CD4-positive, alpha-beta T cell (primary cell): ENCODE measurements at regions of chr6 and their contacts with region 1.

Region 1: DNA sequence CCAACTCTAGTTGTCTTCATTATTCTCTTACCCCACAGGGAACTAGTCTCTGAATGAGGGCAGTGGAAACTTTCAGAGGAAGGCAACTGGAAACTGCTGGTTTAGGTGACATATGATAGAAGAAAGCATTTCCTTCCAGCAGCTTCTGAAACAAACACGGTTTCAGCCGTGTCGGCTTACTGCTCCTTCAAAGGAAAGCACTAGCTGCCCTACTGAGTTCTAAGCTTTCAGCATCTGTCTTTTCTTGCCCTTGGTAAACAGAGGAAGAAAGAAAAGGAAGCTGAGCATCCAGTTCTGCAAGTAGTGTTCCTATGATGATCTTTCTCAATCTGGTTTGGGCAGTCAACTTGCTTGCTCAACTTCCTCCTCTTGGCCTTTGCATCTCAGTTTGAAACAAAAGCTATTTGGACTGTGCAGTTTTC is 117.5 kb upstream of the CEP85L start:
- DNase-seq: peak in 5 of 14 experiments; percentile 7 to 53 (median 34)
- ATAC-seq: peak; percentile 59
- H3K4me3 ChIP-seq: no peak overlapping the region
- H3K4me3 Mint-ChIP-seq: peak overlapping the region; percentile 27
- H3K27ac ChIP-seq: peak overlapping the region; percentile 47 to 51
- H3K27ac Mint-ChIP-seq: peak overlapping the region; percentile 78
- H3K4me1 ChIP-seq: peaks cover 15% of the 10 kb centered on the region
- H3K4me1 Mint-ChIP-seq: peaks cover 29% of the 10 kb centered on the region
- H3K27me3 ChIP-seq: no peaks in the 10 kb centered on the region
- H3K27me3 Mint-ChIP-seq: no peaks in the 10 kb centered on the region
- CTCF ChIP-seq: no peak

Region 2: DNA sequence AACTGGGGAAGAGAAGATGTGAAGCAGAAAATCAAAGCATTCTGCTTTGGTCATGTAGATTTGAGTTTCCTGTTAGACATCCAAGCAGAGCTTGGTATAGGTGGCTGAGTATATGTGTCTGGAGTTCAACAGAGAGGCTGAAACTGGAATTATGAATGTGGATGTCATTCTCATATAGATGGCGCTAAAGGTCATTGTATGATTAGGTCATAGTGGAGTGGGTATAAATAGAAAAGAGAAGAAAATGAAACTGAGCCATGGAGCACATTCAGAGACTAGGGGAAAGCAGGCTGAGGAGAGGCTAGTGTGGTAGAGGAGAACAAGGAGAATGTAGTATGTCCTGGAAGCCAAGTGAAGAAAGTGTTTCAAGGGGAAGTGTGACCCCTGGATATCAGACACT is 516.4 kb before region 1 on chr6:
- CTCF ChIA-PET with region 1: no interaction called
- POLR2A ChIA-PET with region 1: no interaction called
- intact Hi-C with region 1: no loop called
- DNase-seq: no peak
- ATAC-seq: no peak
- H3K4me3 ChIP-seq: no peak overlapping the region
- H3K4me3 Mint-ChIP-seq: no peak overlapping the region
- H3K27ac ChIP-seq: no peak overlapping the region
- H3K27ac Mint-ChIP-seq: no peak overlapping the region
- H3K4me1 ChIP-seq: no peaks in the 10 kb centered on the region
- H3K4me1 Mint-ChIP-seq: no peaks in the 10 kb centered on the region
- H3K27me3 ChIP-seq: peaks cover 0 to 4% of the 10 kb centered on the region in 2 experiments
- H3K27me3 Mint-ChIP-seq: peaks cover 21% of the 10 kb centered on the region
- CTCF ChIP-seq: no peak

Region 3: GRCh38 chr6:118644007-118644406 is 124.9 kb before region 1 on chr6:
- CTCF ChIA-PET with region 1: no interaction called
- POLR2A ChIA-PET with region 1: no interaction called
- intact Hi-C with region 1: no loop called
- DNase-seq: no peak
- ATAC-seq: no peak
- H3K4me3 ChIP-seq: no peak overlapping the region
- H3K4me3 Mint-ChIP-seq: no peak overlapping the region
- H3K27ac ChIP-seq: no peak overlapping the region
- H3K27ac Mint-ChIP-seq: peak overlapping the region; percentile 1
- H3K4me1 ChIP-seq: peaks cover 21% of the 10 kb centered on the region
- H3K4me1 Mint-ChIP-seq: peaks cover 64% of the 10 kb centered on the region
- H3K27me3 ChIP-seq: no peaks in the 10 kb centered on the region
- H3K27me3 Mint-ChIP-seq: no peaks in the 10 kb centered on the region
- CTCF ChIP-seq: no peak

Region 4: GRCh38 chr6:118724211-118724610 is 44.7 kb before region 1 on chr6:
- CTCF ChIA-PET with region 1: interaction called, 5 read pairs
- POLR2A ChIA-PET with region 1: no interaction called
- intact Hi-C with region 1: loop called in 1 of 2 experiments (anchors 5 kb)
- DNase-seq: peak in 1 of 14 experiments; percentile 23
- ATAC-seq: peak; percentile 55
- H3K4me3 ChIP-seq: no peak overlapping the region
- H3K4me3 Mint-ChIP-seq: peak overlapping the region; percentile 77
- H3K27ac ChIP-seq: no peak overlapping the region
- H3K27ac Mint-ChIP-seq: peak overlapping the region; percentile 75
- H3K4me1 ChIP-seq: peaks cover 27% of the 10 kb centered on the region
- H3K4me1 Mint-ChIP-seq: peaks cover 77% of the 10 kb centered on the region
- H3K27me3 ChIP-seq: no peaks in the 10 kb centered on the region
- H3K27me3 Mint-ChIP-seq: no peaks in the 10 kb centered on the region
- CTCF ChIP-seq: no peak

Region 5: GRCh38 chr6:118752803-118753202 is 16.1 kb before region 1 on chr6:
- CTCF ChIA-PET with region 1: no interaction called
- POLR2A ChIA-PET with region 1: no interaction called
- intact Hi-C with region 1: no loop called
- DNase-seq: no peak
- ATAC-seq: no peak
- H3K4me3 ChIP-seq: no peak overlapping the region
- H3K4me3 Mint-ChIP-seq: no peak overlapping the region
- H3K27ac ChIP-seq: no peak overlapping the region
- H3K27ac Mint-ChIP-seq: no peak overlapping the region
- H3K4me1 ChIP-seq: peaks cover 13% of the 10 kb centered on the region
- H3K4me1 Mint-ChIP-seq: peaks cover 18% of the 10 kb centered on the region
- H3K27me3 ChIP-seq: no peaks in the 10 kb centered on the region
- H3K27me3 Mint-ChIP-seq: no peaks in the 10 kb centered on the region
- CTCF ChIP-seq: no peak

Region 6: GRCh38 chr6:118787724-118788423 is 19.0 kb after region 1 on chr6:
- CTCF ChIA-PET with region 1: no interaction called
- POLR2A ChIA-PET with region 1: no interaction called
- intact Hi-C with region 1: no loop called
- DNase-seq: peak in 5 of 14 experiments; percentile 10 to 74 (median 54)
- ATAC-seq: peak; percentile 92
- H3K4me3 ChIP-seq: no peak overlapping the region
- H3K4me3 Mint-ChIP-seq: peak overlapping the region; percentile 5
- H3K27ac ChIP-seq: peak overlapping the region in 1 of 2 donors; percentile 31
- H3K27ac Mint-ChIP-seq: peak overlapping the region; percentile 79
- H3K4me1 ChIP-seq: peaks cover 24% of the 10 kb centered on the region
- H3K4me1 Mint-ChIP-seq: peaks cover 16% of the 10 kb centered on the region
- H3K27me3 ChIP-seq: no peaks in the 10 kb centered on the region
- H3K27me3 Mint-ChIP-seq: no peaks in the 10 kb centered on the region
- CTCF ChIP-seq: no peak